ENCODE measurements at regions of chr19 and their contacts with region 1.

Region 1: GRCh38 chr19:13880059-13881043 is 3.4 kb downstream of the NANOS3 start:
- DNase-seq: peak; percentile 99
- H3K4me3 ChIP-seq: no peak overlapping the region
- H3K27ac ChIP-seq: peak overlapping the region; percentile 64
- H3K4me1 ChIP-seq: peaks cover 30% of the 10 kb centered on the region
- H3K27me3 ChIP-seq: no peaks in the 10 kb centered on the region
- CTCF ChIP-seq: peak; percentile 99

Region 2: DNA sequence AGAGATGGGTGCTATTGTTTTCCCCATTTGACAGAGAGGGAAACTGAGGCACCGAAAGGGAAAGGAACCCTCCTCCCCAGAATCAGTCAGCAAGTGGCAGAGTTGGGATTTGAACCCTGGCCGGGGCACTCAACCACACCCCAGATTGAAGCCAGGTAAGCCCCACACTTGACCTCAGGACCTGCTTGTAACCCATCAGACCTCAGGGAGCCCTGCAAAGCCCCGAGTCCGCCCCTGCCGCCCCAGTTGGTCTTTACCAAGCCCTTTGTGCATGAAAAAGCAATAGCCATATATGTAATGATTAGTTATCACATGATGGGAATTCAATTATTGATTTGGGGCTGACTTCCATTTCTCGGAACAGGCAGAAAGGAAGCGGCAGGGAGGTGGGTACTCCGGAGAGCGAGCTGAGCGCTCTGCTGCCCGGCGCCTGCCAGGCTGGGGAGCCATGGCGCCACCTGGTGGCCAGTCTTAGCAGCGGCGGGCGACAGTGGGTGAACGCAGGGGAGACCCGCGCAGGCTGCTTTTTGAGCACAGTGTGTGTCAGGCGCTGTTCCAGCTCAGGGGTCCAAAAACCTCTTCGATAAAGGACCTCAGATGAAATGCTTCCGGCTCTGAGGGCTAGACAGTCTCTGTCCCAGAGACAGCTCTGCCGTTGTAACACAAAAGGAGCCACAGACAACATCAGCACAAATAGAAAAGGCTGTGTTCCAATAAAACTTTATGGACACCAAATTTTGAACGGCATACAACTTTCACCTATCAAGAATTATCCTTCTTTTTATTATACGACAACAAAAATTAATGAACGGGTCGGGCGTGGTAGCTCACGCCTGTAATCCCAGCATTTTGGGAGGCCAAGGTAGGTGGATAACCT is 291.2 kb before region 1 on chr19:
- intact Hi-C with region 1: no loop called
- DNase-seq: peak; percentile 67
- H3K4me3 ChIP-seq: no peak overlapping the region
- H3K27ac ChIP-seq: no peak overlapping the region
- H3K4me1 ChIP-seq: no peaks in the 10 kb centered on the region
- H3K27me3 ChIP-seq: no peaks in the 10 kb centered on the region
- CTCF ChIP-seq: peak; percentile 99

Region 3: DNA sequence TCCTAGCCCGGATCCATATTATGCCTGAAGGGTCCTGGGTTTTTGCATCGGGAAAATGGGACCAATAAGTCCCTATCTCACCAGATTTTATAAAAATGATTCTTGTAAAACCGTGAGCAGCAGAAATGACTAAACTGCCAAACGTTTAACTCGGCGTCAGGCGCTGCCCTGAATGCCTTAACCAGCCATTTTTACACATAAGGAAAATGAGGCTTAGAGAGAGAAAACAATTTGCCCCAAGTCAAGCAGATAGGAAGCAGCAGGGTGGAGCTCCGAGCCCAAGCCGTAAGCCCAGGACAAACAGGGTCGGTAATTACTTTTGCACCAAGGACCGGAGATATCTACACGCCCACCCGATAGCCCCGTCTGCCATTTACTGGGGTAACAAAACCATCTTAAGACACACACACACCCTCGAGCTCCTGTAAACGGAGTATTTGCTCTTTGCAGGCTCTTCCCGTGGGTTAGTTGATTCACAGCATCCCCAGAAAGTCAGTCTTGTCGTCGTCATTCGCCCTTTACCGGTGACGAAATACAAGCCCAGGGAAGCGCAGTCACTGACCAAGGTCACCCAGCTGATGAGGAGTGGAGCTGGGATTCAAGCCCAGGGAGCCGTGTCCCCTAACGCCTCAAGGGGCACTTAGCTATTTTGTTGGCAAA is 132.1 kb before region 1 on chr19:
- intact Hi-C with region 1: no loop called
- DNase-seq: peak; percentile 50
- H3K4me3 ChIP-seq: peak overlapping the region; percentile 69
- H3K27ac ChIP-seq: peak overlapping the region; percentile 76
- H3K4me1 ChIP-seq: peaks cover 7% of the 10 kb centered on the region
- H3K27me3 ChIP-seq: no peaks in the 10 kb centered on the region
- CTCF ChIP-seq: no peak

Region 4: DNA sequence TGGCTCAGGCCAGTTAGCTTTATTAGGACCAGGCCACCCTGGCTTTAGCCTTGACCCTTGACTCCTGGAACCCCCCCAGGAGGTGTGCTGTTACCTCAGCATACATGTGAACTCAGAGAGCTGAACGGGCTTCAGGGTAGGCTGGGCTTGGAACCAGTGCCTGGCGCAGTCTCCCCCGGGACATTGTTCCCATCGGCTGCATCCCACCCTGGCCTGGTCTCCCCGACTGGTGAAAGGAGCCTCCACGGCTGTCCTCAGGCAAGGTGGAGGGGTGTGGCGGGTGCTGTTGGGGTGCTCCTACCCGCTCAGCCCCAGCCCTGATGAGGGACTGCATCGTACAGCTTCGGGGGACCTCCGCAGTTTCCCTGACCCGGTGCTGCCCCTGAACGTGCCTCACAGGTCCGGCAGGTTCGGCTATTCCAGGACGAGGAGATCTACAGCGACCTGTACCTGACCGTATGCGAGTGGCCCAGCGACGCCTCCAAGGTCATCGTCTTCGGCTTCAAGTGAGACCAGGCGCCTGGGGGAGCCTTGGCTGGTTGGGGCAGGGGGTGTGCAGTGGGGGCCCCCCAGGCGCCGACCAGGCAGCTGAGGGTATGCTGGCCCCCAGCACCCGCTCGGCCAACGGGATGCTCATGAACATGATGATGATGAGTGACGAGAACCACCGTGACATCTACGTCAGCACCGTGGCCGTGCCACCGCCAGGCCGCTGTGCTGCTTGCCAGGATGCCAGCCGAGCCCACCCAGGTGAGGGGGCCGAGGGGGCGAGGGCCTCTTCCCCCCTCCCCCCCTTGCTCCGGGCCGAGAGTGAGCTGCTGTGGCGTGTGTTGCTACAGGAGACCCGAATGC is 75.4 kb after region 1 on chr19:
- intact Hi-C with region 1: loop called (anchors 2 kb)
- DNase-seq: no peak
- H3K4me3 ChIP-seq: no peak overlapping the region
- H3K27ac ChIP-seq: no peak overlapping the region
- H3K4me1 ChIP-seq: peaks cover 9% of the 10 kb centered on the region
- H3K27me3 ChIP-seq: no peaks in the 10 kb centered on the region
- CTCF ChIP-seq: no peak

Region 5: DNA sequence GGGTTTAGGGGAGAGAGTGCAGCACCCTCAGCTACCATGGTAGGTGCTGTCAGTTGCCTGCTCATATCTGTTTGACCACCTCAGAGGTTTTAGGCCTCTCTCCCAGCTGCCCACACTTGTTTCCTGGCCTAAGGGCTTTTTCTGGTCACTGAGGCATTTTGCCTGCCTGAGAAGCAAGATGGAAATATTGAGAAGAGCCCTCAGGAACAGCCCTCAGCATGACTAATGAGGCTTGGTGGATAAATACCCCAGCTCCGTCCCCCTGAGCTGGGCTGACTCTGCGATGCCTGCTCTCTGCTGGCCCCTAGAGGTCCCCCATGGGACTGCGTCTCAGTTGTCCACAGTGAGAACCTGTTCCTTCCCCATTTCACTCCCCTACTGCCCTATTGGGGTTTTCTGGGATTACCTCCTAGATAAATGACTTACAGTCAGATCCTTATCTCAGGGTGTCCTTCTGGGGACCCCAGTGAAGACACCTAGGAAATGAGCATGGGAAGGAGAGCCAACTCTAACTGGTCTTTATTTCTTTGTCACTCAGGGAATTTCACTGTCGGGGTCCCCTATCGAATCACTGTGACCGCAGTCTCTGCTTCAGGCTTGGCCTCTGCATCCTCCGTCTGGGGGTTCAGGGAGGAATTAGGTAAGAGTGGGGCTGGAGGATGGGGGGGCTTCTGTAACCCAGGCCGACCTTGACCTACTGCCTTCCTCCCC is 168.2 kb after region 1 on chr19:
- intact Hi-C with region 1: loop called (anchors 10 kb)
- DNase-seq: peak; percentile 80
- H3K4me3 ChIP-seq: no peak overlapping the region
- H3K27ac ChIP-seq: no peak overlapping the region
- H3K4me1 ChIP-seq: no peaks in the 10 kb centered on the region
- H3K27me3 ChIP-seq: no peaks in the 10 kb centered on the region
- CTCF ChIP-seq: peak; percentile 95

Region 6: DNA sequence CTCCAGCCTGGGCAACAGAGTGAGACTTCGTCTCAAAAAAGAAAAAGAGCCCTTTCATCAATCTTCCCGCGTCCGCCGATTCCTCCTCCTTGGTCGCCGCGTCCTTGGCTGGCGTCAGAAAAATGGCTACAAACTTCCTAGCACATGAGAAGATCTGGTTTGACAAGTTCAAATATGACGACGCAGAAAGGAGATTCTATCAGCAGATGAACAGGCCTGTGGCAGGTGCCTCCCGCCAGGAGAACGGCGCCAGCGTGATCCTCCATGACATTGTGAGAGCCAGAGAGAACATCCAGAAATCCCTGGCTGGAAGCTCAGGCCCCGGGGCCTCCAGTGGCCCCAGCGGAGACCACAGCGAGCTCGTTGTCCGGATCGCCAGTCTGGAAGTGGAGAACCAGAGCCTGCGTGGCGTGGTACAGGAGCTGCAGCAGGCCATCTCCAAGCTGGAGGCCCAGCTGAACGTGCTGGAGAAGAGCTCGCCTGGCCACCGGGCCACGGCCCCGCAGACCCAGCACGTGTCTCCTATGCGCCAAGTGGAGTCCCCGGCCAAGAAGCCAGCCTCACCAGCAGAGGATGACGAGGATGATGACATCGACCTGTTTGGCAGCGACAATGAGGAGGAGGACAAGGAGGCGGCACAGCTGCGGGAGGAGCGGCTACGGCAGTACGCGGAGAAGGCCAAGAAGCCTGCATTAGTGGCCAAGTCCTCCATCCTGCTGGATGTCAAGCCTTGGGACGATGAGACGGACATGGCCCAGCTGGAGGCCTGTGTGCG is 190.1 kb after region 1 on chr19:
- intact Hi-C with region 1: loop called (anchors 2 kb)
- DNase-seq: no peak
- H3K4me3 ChIP-seq: no peak overlapping the region
- H3K27ac ChIP-seq: no peak overlapping the region
- H3K4me1 ChIP-seq: no peaks in the 10 kb centered on the region
- H3K27me3 ChIP-seq: no peaks in the 10 kb centered on the region
- CTCF ChIP-seq: no peak

Measured in colonic mucosa (tissue), 4 donors.